ENCODE measurements at regions of chr12 and their contacts with region 1.

Region 1: DNA sequence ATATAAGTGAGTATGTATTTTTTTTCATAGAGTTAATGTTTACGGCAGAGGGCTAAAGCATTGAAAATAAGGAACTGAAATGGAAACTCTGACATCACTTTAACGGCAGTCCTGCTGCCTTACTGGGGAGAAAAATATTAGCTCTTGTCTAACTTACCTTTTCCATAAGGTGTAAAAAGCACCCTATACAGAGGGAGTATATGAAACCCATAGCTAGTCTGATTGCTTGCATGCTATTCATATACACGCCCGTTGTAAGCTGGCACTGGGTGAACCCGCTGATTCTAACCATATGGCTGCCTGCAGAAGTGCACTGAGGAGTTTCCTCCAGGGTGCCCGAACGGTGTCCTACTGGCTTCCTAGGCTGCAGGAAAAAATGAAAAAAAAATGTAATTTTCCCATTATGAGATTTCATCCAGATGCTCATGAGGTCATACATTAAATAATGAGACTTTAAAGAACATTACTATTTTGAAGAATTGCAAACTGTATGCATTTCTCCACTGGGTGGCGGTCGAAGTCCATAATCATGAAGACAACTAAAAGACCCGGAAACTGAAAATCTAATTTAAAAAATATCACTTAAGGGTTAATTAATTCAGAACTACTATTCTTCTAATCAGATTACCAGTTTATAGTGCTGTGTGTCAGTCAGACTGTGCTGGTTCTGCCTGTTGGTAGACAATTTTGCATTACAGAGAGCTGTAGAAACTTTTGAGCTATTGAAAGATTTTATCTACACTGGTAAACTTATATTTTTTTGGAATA is 144.7 kb downstream of the ALX1 start:
- DNase-seq: peak in 1 of 2 donors; percentile 4
- ATAC-seq: no peak
- H3K4me3 ChIP-seq: no peak overlapping the region
- H3K4me3 Mint-ChIP-seq: no peak overlapping the region
- H3K27ac ChIP-seq: no peak overlapping the region
- H3K27ac Mint-ChIP-seq: no peak overlapping the region
- H3K4me1 ChIP-seq: no peaks in the 10 kb centered on the region
- H3K4me1 Mint-ChIP-seq: no peaks in the 10 kb centered on the region
- H3K27me3 ChIP-seq: no peaks in the 10 kb centered on the region
- H3K27me3 Mint-ChIP-seq: peaks cover 13 to 18% of the 10 kb centered on the region in 2 donors
- CTCF ChIP-seq: peak; percentile 62

Region 2: GRCh38 chr12:85626001-85626781 is 201.4 kb after region 1 on chr12:
- intact Hi-C with region 1: no loop called
- DNase-seq: no peak
- ATAC-seq: no peak
- H3K4me3 ChIP-seq: no peak overlapping the region
- H3K4me3 Mint-ChIP-seq: no peak overlapping the region
- H3K27ac ChIP-seq: no peak overlapping the region
- H3K27ac Mint-ChIP-seq: no peak overlapping the region
- H3K4me1 ChIP-seq: no peaks in the 10 kb centered on the region
- H3K4me1 Mint-ChIP-seq: no peaks in the 10 kb centered on the region
- H3K27me3 ChIP-seq: no peaks in the 10 kb centered on the region
- H3K27me3 Mint-ChIP-seq: no peaks in the 10 kb centered on the region
- CTCF ChIP-seq: no peak

Region 3: DNA sequence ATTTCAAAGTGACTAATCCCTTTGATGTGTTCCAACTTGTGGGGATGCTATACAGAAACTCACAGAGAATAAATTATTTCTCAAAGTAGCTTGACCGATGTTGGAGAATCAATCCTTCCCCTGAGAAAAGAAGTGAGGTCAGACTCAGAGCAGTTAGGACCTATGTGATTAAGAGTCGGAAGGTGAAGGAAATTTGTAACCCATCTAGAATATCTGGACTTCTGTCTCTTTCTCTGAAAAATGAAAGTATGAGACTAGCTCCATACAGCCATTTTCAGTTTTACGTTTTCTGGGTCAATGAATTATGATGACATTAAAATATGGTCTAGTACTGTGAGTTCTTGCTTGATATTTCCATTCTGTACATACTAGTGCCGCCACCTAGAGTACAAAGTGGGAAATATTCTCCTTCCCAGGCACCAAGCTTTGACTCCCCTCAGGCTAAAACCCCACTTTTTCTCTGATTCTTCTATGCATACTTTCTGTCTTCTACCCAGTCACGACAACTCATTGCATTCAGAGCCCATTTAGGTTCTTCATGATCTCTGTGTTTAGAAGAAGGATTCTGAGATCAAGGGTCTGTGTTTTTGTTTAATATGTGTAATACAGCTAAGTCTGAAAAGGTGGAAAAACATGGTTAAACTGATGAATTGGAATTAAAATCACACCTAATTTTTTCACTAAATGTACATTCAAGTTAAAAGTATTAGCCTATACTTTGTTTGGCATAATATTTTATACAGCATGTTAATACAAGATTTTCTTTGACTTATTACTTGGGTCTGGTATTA is 442.4 kb after region 1 on chr12:
- intact Hi-C with region 1: loop called (anchors 2 kb)
- DNase-seq: peak in 1 of 2 donors; percentile 15
- ATAC-seq: peak; percentile 54 to 75 (median 75)
- H3K4me3 ChIP-seq: no peak overlapping the region
- H3K4me3 Mint-ChIP-seq: no peak overlapping the region
- H3K27ac ChIP-seq: no peak overlapping the region
- H3K27ac Mint-ChIP-seq: no peak overlapping the region
- H3K4me1 ChIP-seq: no peaks in the 10 kb centered on the region
- H3K4me1 Mint-ChIP-seq: peaks cover 0 to 5% of the 10 kb centered on the region in 2 donors
- H3K27me3 ChIP-seq: no peaks in the 10 kb centered on the region
- H3K27me3 Mint-ChIP-seq: peaks cover 0 to 8% of the 10 kb centered on the region in 2 donors
- CTCF ChIP-seq: peak; percentile 64